WTC11 (cell line): ENCODE measurements at regions of chr2 and their contacts with region 1.

Region 1: DNA sequence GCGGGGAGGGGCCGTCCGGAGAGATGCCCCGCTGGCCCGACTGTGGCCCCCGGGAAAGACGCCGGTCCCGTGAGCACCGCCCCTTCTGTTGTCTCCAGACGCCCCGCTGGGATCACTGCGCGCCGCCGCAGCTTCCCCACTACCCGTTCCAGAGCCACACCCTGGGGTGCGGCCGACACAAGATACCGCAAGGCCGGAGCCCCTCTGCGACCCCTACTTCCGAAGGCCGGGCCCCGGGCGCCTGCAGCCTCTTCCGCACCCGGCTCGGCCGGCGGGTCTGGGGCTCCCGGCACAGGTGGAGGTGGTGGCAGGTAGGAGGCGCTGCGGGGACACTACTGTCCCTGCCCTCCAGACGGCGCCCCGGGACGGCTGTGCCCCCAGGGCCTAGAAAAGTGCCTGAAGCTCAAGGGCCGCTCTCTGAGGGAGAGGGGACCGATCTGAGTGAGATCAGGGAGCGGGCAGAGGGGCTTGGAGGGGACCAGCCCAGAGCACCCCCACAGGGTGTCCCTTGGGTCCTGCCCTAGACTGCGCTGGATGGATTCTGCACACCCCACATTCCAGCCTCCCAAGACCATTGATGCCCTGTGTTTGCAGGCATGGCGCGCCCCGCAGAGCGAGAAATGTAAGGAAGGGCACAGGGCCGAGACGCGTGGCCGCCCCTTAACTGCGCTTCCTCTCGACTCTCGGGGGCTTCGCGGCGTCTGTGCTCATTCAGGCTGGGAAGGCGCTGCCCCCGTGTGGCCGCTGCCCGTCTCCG is 80.0 kb downstream of the GFPT1 start:
- DNase-seq: peak; percentile 89
- ATAC-seq: peak; percentile 84
- H3K4me3 Mint-ChIP-seq: peak overlapping the region; percentile 79
- H3K27ac Mint-ChIP-seq: no peak overlapping the region
- H3K4me1 Mint-ChIP-seq: peaks cover 16% of the 10 kb centered on the region
- H3K27me3 Mint-ChIP-seq: peaks cover 35% of the 10 kb centered on the region
- CTCF ChIP-seq: peak; percentile 58

Region 2: GRCh38 chr2:69054431-69054830 is 252.6 kb before region 1 on chr2:
- CTCF ChIA-PET with region 1: no interaction called
- POLR2A ChIA-PET with region 1: no interaction called
- DNase-seq: no peak
- ATAC-seq: no peak
- H3K4me3 Mint-ChIP-seq: no peak overlapping the region
- H3K27ac Mint-ChIP-seq: no peak overlapping the region
- H3K4me1 Mint-ChIP-seq: 0 out of 2 replicates have a peak, but pooled peaks cover 3% of the 10 kb centered on the region
- H3K27me3 Mint-ChIP-seq: no peaks in the 10 kb centered on the region
- CTCF ChIP-seq: no peak

Region 3: DNA sequence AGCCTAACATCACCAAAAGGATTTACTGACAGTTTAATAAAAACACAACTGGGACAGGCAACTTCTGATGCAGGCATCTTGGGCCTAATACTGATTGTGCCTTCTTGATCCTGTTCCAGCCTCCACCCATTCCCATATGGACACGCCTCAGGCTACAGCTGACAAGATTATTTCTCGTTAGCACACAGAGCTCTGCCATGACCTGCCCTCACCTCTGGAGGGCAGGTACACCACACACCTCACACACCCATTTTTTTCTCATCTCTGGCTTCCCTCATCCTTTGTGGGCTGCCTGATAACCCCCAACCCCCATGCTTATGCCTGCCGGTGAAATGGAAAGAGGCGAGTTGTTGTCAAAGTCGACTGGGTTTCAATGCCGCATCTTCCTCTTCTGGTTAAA is 147.0 kb before region 1 on chr2:
- CTCF ChIA-PET with region 1: interaction called, 24 read pairs
- POLR2A ChIA-PET with region 1: no interaction called
- DNase-seq: peak; percentile 51
- ATAC-seq: peak; percentile 98
- H3K4me3 Mint-ChIP-seq: no peak overlapping the region
- H3K27ac Mint-ChIP-seq: no peak overlapping the region
- H3K4me1 Mint-ChIP-seq: peaks cover 28% of the 10 kb centered on the region
- H3K27me3 Mint-ChIP-seq: no peaks in the 10 kb centered on the region
- CTCF ChIP-seq: 0 out of 2 replicates have a peak, but pooled peaks have one; percentile 31

Region 4: DNA sequence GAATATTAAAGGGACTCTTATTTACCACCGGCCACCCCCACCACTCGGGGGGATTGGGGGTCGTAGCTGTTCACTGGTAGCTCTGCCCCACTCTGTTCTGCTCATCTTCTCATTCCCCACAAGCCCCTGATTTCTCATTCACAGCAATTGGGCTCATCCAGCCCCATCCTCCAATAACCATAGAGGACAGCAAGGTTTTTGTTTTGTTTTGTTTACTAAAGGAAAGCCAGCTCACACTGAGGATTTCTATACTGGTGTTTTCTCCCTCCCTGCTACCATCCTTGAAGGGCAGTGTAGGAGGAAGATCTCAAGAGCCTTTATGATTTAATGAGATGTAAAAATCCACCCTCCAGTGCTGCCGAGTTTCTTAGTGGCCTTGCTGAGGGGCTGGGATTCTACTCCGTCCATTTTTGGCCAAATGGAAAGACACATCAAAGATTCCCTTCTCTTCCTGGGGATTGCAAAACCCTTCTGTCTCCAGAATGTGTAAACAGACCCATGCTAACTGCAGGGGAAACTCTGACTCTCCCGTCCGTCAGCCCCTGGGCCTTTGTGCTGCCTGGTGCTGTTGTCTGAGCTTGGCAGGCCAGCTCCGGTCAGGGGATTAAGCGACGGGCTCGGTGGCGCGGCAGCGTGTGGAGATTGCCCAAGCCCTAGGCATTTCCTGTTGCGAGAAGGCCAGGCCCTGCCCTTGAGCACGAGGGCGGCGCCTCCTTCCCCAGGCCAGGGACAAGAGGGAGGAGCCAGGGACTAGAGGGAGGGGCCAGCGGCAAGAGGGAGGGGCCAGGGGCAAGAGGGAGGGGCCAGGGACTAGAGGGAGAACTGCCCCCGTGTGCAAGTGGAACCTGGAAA is 129.0 kb before region 1 on chr2:
- CTCF ChIA-PET with region 1: interaction called, 11 read pairs
- POLR2A ChIA-PET with region 1: no interaction called
- DNase-seq: peak; percentile 96
- ATAC-seq: peak; percentile 98
- H3K4me3 Mint-ChIP-seq: peak overlapping the region; percentile 64
- H3K27ac Mint-ChIP-seq: peak overlapping the region; percentile 100
- H3K4me1 Mint-ChIP-seq: peaks cover 24% of the 10 kb centered on the region
- H3K27me3 Mint-ChIP-seq: no peaks in the 10 kb centered on the region
- CTCF ChIP-seq: no peak

Region 5: GRCh38 chr2:69330781-69331180 is 23.8 kb after region 1 on chr2:
- CTCF ChIA-PET with region 1: no interaction called
- POLR2A ChIA-PET with region 1: no interaction called
- DNase-seq: no peak
- ATAC-seq: no peak
- H3K4me3 Mint-ChIP-seq: no peak overlapping the region
- H3K27ac Mint-ChIP-seq: no peak overlapping the region
- H3K4me1 Mint-ChIP-seq: no peaks in the 10 kb centered on the region
- H3K27me3 Mint-ChIP-seq: no peaks in the 10 kb centered on the region
- CTCF ChIP-seq: no peak

Region 6: DNA sequence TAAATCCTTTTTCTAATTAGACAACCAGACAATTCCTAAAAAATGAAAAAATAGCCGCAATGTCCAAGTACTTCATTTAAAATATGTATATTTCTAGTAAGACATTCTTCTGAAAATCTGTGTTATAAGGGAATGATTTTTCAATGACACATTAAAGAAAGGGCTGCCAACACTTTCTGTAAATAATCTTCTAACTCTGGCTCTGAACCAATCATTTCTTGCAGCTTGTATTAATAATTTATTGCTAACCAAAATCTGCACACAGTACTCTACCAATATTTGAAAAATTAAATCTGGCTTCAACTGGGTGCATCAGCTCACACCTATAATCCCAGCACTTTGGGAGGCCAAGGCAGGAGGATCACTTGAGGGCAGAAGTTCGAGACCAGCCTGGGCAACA is 122.0 kb after region 1 on chr2:
- CTCF ChIA-PET with region 1: no interaction called
- POLR2A ChIA-PET with region 1: no interaction called
- DNase-seq: no peak
- ATAC-seq: no peak
- H3K4me3 Mint-ChIP-seq: no peak overlapping the region
- H3K27ac Mint-ChIP-seq: no peak overlapping the region
- H3K4me1 Mint-ChIP-seq: no peaks in the 10 kb centered on the region
- H3K27me3 Mint-ChIP-seq: no peaks in the 10 kb centered on the region
- CTCF ChIP-seq: no peak

Region 7: DNA sequence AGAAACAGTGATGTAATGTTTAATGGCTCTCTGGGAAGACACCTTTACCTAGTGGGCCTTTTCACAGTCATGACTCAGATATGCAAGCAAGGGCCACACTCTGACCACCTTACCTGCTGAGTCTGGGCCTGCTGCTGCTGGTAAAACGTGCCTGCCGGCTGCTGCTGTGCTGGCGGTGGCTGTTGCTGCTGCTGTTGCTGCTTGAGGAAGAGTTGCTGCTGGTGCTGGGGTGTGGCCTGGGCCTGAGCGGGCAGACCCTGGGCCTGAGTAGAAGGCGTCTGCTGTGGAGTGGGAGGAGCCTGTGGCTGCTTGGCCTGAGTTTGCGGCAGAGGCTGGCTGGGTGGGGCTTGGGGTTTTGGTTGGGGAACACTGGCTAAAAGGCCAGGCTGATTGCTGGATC is 211.8 kb after region 1 on chr2:
- CTCF ChIA-PET with region 1: no interaction called
- POLR2A ChIA-PET with region 1: no interaction called
- DNase-seq: peak; percentile 70
- ATAC-seq: peak; percentile 99
- H3K4me3 Mint-ChIP-seq: no peak overlapping the region
- H3K27ac Mint-ChIP-seq: peak overlapping the region; percentile 34
- H3K4me1 Mint-ChIP-seq: peaks cover 15% of the 10 kb centered on the region
- H3K27me3 Mint-ChIP-seq: no peaks in the 10 kb centered on the region
- CTCF ChIP-seq: no peak